Gastrocnemius medialis (tissue), 4 donors: ENCODE measurements at regions of chr1 and their contacts with region 1.

Region 1: DNA sequence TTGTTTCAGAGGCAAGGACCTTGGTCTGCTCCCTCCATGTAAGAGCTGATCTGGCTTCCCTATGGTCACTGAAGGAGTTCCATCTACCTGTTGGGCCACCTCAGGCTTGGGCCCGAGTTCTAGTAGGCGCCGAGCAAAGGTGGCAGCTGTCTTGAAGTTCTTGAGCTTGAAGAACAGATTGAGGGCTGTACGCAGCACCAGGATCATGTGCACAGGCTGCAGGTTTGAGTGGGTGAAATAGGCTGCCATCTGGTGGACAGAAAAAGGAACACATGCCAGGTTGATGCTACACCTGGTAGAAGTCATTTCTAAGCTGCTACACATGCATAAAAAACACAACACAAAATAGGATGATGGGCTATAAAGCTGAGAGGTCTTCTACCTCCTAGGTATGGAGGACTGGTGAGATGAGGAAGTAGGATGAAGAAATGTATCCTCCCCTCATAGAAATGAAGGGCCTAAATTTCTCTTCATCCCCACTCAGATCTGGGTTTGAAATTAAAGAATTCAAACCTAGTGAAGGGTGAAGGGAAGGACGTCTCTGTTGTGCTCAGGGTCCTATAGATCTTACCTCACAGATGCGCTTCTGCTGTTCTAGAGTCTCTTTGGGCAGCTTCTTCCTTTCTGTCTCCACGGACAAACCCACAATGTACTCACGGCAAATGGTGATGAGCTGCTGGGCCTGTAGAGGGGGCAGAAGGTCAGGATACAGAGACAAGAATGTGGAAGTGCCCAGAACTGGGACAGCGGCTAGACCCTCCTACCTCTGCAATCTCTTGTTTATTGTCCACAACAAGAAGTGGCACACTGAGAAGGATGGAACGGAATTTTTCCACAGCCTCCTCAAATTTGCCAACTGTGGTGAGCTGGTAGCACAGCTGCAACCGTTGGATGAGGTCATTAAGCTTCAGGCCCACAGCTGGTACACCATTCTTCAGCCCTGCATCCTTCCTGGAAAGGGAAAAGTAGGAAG is 6.6 kb upstream of the PEX19 start:
- DNase-seq: peak; percentile 51 to 79
- ATAC-seq: peak; percentile 89 to 92
- H3K4me3 ChIP-seq: no peak overlapping the region
- H3K27ac ChIP-seq: peak overlapping the region in 2 of 4 donors; percentile 34 to 61
- H3K4me1 ChIP-seq: no peaks in the 10 kb centered on the region
- H3K27me3 ChIP-seq: no peaks in the 10 kb centered on the region
- CTCF ChIP-seq: peak; percentile 74 to 85 (median 80)
- POLR2A ChIP-seq: no peak

Region 2: DNA sequence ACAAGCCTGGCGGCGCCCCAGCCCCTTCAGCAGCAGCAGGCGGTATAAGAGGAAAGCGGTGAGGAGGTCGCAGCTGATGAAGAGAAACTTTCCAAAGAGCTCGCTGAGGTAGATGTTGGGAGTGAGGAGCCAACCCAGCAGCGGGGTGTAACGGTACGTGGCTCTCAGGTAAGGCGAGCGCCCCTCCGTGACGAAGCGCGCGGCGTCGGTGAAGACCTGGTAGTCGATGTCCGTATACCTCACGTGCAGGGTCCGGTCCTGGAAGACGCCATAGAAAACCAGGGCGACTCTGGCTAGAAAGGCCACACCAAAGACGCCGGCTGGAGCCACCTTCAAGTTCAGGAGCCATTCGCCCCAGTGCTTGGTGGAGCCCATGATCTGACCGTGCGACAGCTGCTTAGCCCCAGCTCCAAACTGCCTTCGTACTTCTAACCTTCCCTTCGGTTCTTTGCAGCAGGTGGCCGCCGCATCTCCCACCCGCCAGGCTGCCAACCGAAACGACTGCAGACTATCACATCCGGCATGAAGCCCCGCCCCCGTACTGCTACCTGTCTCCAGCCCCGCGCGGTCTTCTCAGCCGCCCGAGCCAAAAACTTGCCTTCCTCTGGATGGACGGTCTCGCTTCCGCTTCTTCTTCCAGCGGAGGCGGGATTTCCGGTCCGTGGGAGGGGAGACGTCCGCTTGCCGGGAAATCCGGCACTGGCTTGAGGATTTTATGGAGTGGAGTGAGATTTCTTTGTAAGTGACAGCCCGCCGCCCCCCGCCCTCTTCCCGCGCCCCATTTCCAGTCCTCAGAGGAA is 260.0 kb before region 1 on chr1 and contains the start of gene PIGM:
- in situ Hi-C with region 1: no loop called
- intact Hi-C with region 1: loop called (anchors 5 kb)
- DNase-seq: peak; percentile 90 to 94
- ATAC-seq: peak; percentile 97
- H3K4me3 ChIP-seq: peak within 1 kb of the TSS; percentile 80 to 94 (median 88)
- H3K27ac ChIP-seq: peak within 1 kb of the TSS; percentile 74 to 88 (median 81)
- H3K4me1 ChIP-seq: peaks cover 18 to 23% of the 10 kb centered on the region in 2 donors
- H3K27me3 ChIP-seq: no peaks in the 10 kb centered on the region
- CTCF ChIP-seq: no peak
- POLR2A ChIP-seq: peak in 1 of 2 donors; percentile 57
- total RNA-seq, gene PIGM: 0.55 to 0.75 (median 0.72) TPM

Region 3: DNA sequence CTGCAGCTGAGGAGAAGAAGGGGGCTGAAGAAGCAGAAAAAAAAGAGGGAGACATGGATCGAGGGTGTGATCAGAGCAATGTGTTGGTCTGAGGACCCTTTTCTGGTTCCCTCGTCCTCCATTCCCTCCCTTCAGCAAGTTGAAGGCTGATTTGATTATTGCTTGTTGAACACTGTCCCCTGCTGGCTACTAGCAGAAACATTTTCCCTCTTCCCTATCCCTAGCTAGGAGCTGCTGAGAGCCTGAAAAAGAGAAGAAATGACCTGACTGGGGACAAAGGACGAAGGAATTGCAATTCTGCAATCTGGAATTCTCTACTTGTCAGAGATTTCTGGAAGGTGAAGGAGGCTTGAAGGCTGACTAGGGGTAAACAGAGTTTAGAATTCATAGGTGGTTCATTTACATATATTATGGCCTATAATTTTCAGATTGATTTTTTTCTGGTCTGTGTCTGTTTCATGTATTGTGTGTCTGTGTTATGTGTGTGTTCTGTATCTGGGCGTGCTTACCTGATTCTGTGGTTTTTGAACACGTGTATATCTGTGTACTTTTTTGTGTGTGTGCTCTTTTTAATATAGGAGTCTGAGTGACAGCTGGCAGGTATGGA is 85.1 kb after region 1 on chr1:
- in situ Hi-C with region 1: no loop called
- intact Hi-C with region 1: loop called (anchors 5 kb)
- DNase-seq: no peak
- ATAC-seq: peak; percentile 85 to 96
- H3K4me3 ChIP-seq: no peak overlapping the region
- H3K27ac ChIP-seq: no peak overlapping the region
- H3K4me1 ChIP-seq: peaks cover 0 to 9% of the 10 kb centered on the region in 2 donors
- H3K27me3 ChIP-seq: no peaks in the 10 kb centered on the region
- CTCF ChIP-seq: peak; percentile 83 to 96 (median 87)
- POLR2A ChIP-seq: no peak